Sigmoid colon (tissue), 7 donors: ENCODE measurements at regions of chr19 and their contacts with region 1.

Region 1: GRCh38 chr19:10332955-10333757 is at the start of gene RAVER1:
- DNase-seq: peak; percentile 99
- H3K4me3 ChIP-seq: peak within 1 kb of the TSS; percentile 59 to 76 (median 68)
- H3K27ac ChIP-seq: peak within 1 kb of the TSS; percentile 84 to 95 (median 91)
- H3K4me1 ChIP-seq: peaks cover 0 to 33% (median 27%) of the 10 kb centered on the region in 4 donors
- H3K27me3 ChIP-seq: no peaks in the 10 kb centered on the region
- CTCF ChIP-seq: no peak
- EP300 ChIP-seq: no peak
- POLR2A ChIP-seq: peak; percentile 56 to 69
- total RNA-seq, gene RAVER1: 10.0 to 28.5 (median 14.9) TPM

Region 2: DNA sequence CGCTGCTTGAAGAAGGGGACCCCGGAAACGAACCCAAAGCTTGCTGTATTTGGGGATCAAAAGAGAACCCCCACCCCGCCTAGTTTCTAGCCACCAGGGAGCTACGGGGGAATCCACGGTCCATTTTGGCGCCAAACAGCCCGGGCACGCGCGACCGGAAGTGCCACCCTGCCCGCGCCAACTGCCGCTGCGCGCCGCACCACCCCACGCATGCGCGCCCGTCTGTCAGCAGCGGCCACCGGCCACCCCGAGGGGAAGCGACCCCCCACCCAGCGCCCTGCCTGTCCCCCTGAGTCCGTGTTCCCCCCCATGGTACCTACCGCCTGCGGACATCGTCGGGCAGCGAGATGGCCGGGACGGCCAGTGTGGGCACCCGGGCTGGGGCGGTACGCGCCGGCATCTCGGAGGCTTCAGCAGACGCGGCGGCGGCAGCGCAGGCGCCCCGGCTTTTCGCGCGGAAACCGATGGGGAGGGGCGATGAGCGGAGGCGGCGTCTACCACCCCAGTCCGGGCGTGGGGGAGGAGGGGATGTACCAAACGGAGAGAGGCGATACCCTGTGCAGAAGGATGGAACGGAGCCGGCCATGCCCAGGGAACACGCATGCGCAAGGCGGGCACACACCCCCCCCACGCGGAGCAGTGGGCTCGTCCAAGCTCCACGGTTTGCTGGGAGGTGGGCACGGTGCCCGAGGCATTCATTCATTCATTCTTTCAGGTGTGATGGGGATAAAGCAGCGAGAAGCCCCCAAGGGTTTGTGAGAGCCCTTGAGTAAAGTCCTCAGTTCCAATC is 138.5 kb before region 1 on chr19 and contains the start of gene DNMT1:
- intact Hi-C with region 1: loop called (anchors 10 kb)
- DNase-seq: peak; percentile 98
- H3K4me3 ChIP-seq: peak within 1 kb of the TSS; percentile 63 to 92 (median 66)
- H3K27ac ChIP-seq: peak within 1 kb of the TSS; percentile 85 to 97 (median 88)
- H3K4me1 ChIP-seq: peaks cover 5 to 19% (median 18%) of the 10 kb centered on the region in 4 donors
- H3K27me3 ChIP-seq: no peaks in the 10 kb centered on the region
- CTCF ChIP-seq: no peak
- EP300 ChIP-seq: no peak
- POLR2A ChIP-seq: peak; percentile 54 to 56
- total RNA-seq, gene DNMT1: 22.1 to 47.6 (median 34.9) TPM

Region 3: DNA sequence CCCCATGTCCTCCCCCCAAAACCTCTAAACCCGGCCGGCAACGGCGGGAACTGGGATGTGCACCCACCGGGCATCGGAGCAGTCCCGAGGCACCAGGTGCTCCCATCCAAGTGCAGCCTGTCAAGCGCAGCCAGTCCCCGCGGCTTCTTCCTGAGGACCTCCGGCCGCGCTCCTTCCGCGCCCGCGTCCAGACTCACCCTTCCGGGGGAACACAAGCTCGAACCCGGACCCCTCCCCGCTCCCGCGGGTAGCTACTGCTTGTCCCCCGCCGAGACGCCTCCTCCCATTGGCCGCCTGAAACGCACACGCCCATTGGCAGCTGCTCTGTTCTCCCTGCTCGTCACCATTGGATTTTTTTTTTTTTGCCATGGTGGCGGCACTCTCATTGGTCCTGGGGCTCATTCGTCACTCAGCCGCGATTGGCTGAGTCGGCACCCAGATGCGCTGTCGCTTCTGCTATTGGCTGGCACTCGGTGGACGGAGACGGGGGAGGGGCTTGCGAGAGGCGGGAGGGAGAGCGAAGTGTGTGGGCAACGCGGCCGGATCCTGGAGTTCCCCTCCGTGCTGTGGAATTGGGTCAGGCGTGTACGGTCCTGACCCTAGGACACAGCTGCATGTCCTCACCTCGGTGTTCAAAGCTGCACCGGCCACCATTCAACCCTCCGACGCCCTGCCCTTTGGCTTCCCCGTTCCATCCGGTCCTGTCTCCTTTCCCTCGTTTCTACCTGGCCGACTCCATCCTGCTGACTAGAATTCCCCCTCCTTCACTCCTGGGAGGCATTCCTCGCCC is 47.4 kb after region 1 on chr19 and contains the start of gene TYK2:
- intact Hi-C with region 1: loop called (anchors 2 kb)
- DNase-seq: peak; percentile 98
- H3K4me3 ChIP-seq: peak within 1 kb of the TSS; percentile 67 to 97 (median 88)
- H3K27ac ChIP-seq: peak within 1 kb of the TSS; percentile 79 to 87 (median 86)
- H3K4me1 ChIP-seq: peaks cover 0 to 14% (median 12%) of the 10 kb centered on the region in 4 donors
- H3K27me3 ChIP-seq: no peaks in the 10 kb centered on the region
- CTCF ChIP-seq: no peak
- EP300 ChIP-seq: no peak
- POLR2A ChIP-seq: peak; percentile 51 to 54
- total RNA-seq, gene TYK2: 36.7 to 125 (median 50.3) TPM

Region 4: DNA sequence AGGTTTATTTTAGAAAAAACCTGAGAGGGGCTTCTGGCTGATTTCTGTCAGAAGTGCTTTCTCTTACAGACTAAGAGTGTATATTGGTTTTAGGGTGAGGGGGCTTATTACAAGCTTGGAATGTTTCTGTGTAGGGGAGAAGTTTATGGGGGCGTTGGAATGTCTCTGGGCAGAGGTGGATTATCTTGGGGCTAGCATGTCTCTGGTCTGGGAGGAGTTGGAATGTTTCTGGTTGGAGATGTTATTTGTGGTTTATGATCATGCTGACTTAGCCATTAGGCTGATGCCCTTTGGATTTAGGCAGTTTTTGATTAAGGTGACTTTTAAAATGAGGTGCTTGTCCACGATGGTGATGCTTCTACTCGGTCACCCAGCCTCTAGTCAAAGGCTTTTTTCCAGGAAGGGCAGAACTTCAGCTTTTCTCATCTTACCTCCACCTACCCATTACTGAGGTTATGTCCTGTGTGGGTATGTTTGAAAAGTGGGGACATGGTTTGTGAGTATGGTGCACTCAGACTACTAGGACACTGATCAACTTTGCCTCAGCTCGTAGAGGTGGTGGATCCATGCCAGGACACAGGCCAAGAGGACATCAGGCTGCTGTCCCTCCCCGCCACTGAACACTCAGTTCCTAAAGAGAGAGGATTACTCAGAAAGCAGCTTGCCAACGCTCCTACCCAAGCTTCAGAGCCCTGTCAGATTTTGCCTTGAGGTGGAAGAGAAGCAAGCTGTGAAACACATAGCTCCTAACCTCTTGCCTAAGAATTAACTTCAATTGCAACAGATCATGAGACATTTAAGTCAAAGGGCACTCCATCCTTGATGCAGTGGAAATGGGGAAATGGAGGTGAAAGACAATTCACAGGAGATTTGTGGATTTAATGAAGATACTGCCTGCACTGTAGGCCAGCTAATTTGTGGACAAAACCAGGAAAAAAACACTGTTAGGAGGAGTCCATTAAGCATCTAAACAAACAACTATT is 1897.9 kb after region 1 on chr19:
- intact Hi-C with region 1: no loop called
- DNase-seq: no peak
- H3K4me3 ChIP-seq: no peak overlapping the region
- H3K27ac ChIP-seq: no peak overlapping the region
- H3K4me1 ChIP-seq: no peaks in the 10 kb centered on the region
- H3K27me3 ChIP-seq: no peaks in the 10 kb centered on the region
- CTCF ChIP-seq: no peak
- EP300 ChIP-seq: no peak
- POLR2A ChIP-seq: no peak